B cell (primary cell): ENCODE measurements at regions of chr11 and their contacts with region 1.

Region 1: GRCh38 chr11:112289588-112290492 is 29.2 kb upstream of the PLET1 start:
- DNase-seq: peak; percentile 88
- ATAC-seq: peak; percentile 98
- H3K4me3 ChIP-seq: peak overlapping the region in 4 of 5 experiments; percentile 40 to 62 (median 53)
- H3K4me3 Mint-ChIP-seq: peak overlapping the region; percentile 87
- H3K27ac ChIP-seq: peak overlapping the region in 1 of 2 donors; percentile 39
- H3K27ac Mint-ChIP-seq: peak overlapping the region; percentile 85
- H3K4me1 ChIP-seq: peaks cover 9 to 13% of the 10 kb centered on the region in 2 donors
- H3K4me1 Mint-ChIP-seq: peaks cover 11% of the 10 kb centered on the region
- H3K27me3 ChIP-seq: peaks cover 0 to 3% (median 0%) of the 10 kb centered on the region in 4 experiments
- H3K27me3 Mint-ChIP-seq: no peaks in the 10 kb centered on the region
- CTCF ChIP-seq: peak; percentile 89

Region 2: GRCh38 chr11:112555491-112556364 is 265.9 kb after region 1 on chr11:
- CTCF ChIA-PET with region 1: interaction called, 20 read pairs
- POLR2A ChIA-PET with region 1: no interaction called
- intact Hi-C with region 1: loop called (anchors 1 kb)
- DNase-seq: peak; percentile 51
- ATAC-seq: peak; percentile 43
- H3K4me3 ChIP-seq: no peak overlapping the region
- H3K4me3 Mint-ChIP-seq: no peak overlapping the region
- H3K27ac ChIP-seq: no peak overlapping the region
- H3K27ac Mint-ChIP-seq: no peak overlapping the region
- H3K4me1 ChIP-seq: no peaks in the 10 kb centered on the region
- H3K4me1 Mint-ChIP-seq: no peaks in the 10 kb centered on the region
- H3K27me3 ChIP-seq: peaks cover 0 to 3% (median 0%) of the 10 kb centered on the region in 4 experiments
- H3K27me3 Mint-ChIP-seq: peaks cover 9% of the 10 kb centered on the region
- CTCF ChIP-seq: peak; percentile 43